ENCODE measurements at regions of chr17 and their contacts with region 1.

Region 1: DNA sequence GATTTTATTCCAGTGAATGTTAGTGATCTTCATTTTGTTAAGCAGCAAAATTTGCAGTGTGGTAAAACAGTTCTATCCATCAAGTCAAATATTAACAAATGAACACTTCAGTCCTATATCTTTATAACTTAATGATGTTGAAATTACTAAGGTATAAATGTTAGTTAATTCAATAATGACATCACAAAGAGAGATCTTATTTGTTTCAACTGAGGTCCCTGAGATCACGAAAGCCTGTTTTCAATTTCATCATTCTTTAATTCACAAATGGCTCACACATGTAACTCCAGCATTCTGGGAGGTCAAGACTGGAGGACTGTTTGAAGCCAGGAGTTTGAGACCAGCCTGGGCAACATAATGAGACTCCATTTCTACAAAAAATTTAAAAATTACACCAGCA is 13.9 kb downstream of the SMURF2 start:
- DNase-seq: no peak
- ATAC-seq: no peak
- H3K4me3 ChIP-seq: no peak overlapping the region
- H3K4me3 Mint-ChIP-seq: peak overlapping the region in 1 of 10 donors; percentile 30
- H3K27ac ChIP-seq: no peak overlapping the region
- H3K27ac Mint-ChIP-seq: peak overlapping the region in 1 of 9 donors; percentile 29
- H3K4me1 ChIP-seq: peaks cover 0 to 10% of the 10 kb centered on the region in 2 donors
- H3K4me1 Mint-ChIP-seq: peaks cover 21 to 65% (median 43%) of the 10 kb centered on the region in 7 donors
- H3K27me3 ChIP-seq: no peaks in the 10 kb centered on the region
- H3K27me3 Mint-ChIP-seq: no peaks in the 10 kb centered on the region

Region 2: DNA sequence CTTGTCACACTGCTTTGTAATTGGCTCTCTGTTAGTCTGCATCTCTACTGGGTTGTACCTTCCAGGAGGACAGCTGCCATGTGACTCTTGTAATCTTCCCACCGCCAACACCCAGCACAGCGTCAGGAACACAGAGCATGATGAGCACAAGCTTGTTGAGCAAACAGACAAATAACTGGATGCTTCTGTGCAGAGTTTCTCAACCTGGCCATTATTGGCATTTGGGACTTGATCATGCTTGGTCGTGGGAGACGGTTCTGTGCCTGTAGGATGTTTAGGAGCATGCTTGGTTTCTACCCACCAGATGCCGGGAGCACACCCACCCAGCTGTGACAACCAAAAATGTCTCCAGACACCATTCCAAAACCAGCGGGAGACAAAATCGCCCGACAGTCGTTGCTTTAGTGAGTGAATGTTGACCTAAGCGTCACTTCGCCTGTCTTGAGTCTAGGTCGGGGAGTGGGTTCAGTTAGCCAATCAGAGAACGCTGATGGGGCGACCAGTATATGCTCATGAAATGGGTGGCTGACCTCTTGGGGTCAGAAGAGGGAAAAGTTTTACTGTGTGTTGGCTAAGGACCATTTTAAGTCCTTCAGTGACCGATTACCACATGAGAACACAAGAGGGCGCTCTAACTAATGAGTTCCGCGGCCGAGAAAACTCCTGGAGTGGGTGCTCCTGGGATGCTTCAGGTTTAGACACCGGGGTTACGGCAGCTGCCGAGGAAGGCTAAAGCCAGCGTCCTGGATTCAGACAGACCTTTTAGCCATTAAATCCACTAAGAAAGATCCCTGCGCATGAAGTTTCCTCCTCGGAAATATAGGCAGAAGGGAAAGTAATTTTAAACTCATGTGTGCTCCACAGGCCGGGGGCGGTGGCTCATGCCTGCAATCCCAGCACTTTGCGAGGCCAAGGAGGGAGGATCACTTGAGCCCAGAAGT is 327.4 kb before region 1 on chr17:
- CTCF ChIA-PET with region 1: interaction called, 3 read pairs
- POLR2A ChIA-PET with region 1: no interaction called
- intact Hi-C with region 1: loop called in 1 of 2 experiments (anchors 5 kb)
- DNase-seq: peak in 8 of 9 donors; percentile 32 to 67 (median 54)
- ATAC-seq: peak; percentile 85
- H3K4me3 ChIP-seq: no peak overlapping the region
- H3K4me3 Mint-ChIP-seq: peak overlapping the region in 6 of 10 donors; percentile 20 to 62 (median 44)
- H3K27ac ChIP-seq: no peak overlapping the region
- H3K27ac Mint-ChIP-seq: peak overlapping the region in 8 of 9 donors; percentile 60 to 95 (median 82)
- H3K4me1 ChIP-seq: peaks cover 0 to 7% of the 10 kb centered on the region in 2 donors
- H3K4me1 Mint-ChIP-seq: peaks cover 2 to 35% (median 22%) of the 10 kb centered on the region in 7 donors
- H3K27me3 ChIP-seq: no peaks in the 10 kb centered on the region
- H3K27me3 Mint-ChIP-seq: peaks cover 0 to 9% (median 0%) of the 10 kb centered on the region in 5 donors

Region 3: GRCh38 chr17:64544742-64545141 is 103.5 kb before region 1 on chr17:
- CTCF ChIA-PET with region 1: no interaction called
- POLR2A ChIA-PET with region 1: no interaction called
- intact Hi-C with region 1: loop called in 1 of 2 experiments (anchors 5 kb)
- DNase-seq: no peak
- ATAC-seq: no peak
- H3K4me3 ChIP-seq: no peak overlapping the region
- H3K4me3 Mint-ChIP-seq: no peak overlapping the region
- H3K27ac ChIP-seq: no peak overlapping the region
- H3K27ac Mint-ChIP-seq: peak overlapping the region in 1 of 9 donors; percentile 70
- H3K4me1 ChIP-seq: no peaks in the 10 kb centered on the region
- H3K4me1 Mint-ChIP-seq: no peaks in the 10 kb centered on the region
- H3K27me3 ChIP-seq: no peaks in the 10 kb centered on the region
- H3K27me3 Mint-ChIP-seq: no peaks in the 10 kb centered on the region

Region 4: GRCh38 chr17:64599187-64599676 is 49.0 kb before region 1 on chr17:
- CTCF ChIA-PET with region 1: interaction called, 8 read pairs
- POLR2A ChIA-PET with region 1: interaction called, 5 read pairs
- intact Hi-C with region 1: loop called (anchors 2 to 5 kb)
- DNase-seq: peak; percentile 21 to 60 (median 39)
- ATAC-seq: peak; percentile 99
- H3K4me3 ChIP-seq: no peak overlapping the region
- H3K4me3 Mint-ChIP-seq: peak overlapping the region; percentile 65 to 86 (median 76)
- H3K27ac ChIP-seq: peak overlapping the region; percentile 40
- H3K27ac Mint-ChIP-seq: peak overlapping the region; percentile 64 to 95 (median 79)
- H3K4me1 ChIP-seq: peaks cover 8 to 14% of the 10 kb centered on the region in 2 donors
- H3K4me1 Mint-ChIP-seq: peaks cover 27 to 52% (median 38%) of the 10 kb centered on the region in 7 donors
- H3K27me3 ChIP-seq: no peaks in the 10 kb centered on the region
- H3K27me3 Mint-ChIP-seq: no peaks in the 10 kb centered on the region

Region 5: GRCh38 chr17:64736804-64737492 is 88.7 kb after region 1 on chr17:
- CTCF ChIA-PET with region 1: interaction called, 4 read pairs
- POLR2A ChIA-PET with region 1: no interaction called
- intact Hi-C with region 1: loop called (anchors 2 to 5 kb)
- DNase-seq: peak in 8 of 9 donors; percentile 15 to 59 (median 53)
- ATAC-seq: peak; percentile 78
- H3K4me3 ChIP-seq: no peak overlapping the region
- H3K4me3 Mint-ChIP-seq: peak overlapping the region in 1 of 10 donors; percentile 39
- H3K27ac ChIP-seq: no peak overlapping the region
- H3K27ac Mint-ChIP-seq: peak overlapping the region in 3 of 9 donors; percentile 8 to 59 (median 9)
- H3K4me1 ChIP-seq: peaks cover 0 to 12% of the 10 kb centered on the region in 2 donors
- H3K4me1 Mint-ChIP-seq: peaks cover 6 to 26% (median 18%) of the 10 kb centered on the region in 7 donors
- H3K27me3 ChIP-seq: no peaks in the 10 kb centered on the region
- H3K27me3 Mint-ChIP-seq: no peaks in the 10 kb centered on the region